ENCODE measurements at regions of chr14 and their contacts with region 1.

Region 1: DNA sequence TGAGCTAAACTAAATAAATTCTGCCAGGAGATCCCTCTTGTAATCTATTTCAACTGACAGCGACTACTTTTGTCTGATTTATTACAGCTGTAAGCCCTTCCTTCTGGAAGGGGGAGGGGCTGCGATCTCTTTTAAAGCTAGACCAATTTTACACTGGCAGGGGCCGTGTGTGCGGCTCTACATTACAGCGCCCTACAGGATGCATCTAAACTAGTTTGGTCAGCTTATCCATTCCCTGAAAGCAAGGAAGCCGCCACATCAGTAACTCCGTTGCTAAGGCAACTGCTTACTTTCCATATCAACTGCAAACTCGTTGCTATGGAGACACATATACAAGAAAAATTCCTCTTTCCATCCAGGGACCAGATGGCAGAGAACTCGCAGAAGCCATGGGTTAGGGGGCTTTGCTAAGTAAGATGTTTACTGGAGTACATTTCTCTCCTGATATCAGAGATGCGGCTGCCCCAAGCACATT is 17.4 kb downstream of the FOXN3 start:
- DNase-seq: no peak
- ATAC-seq: peak; percentile 42 to 47
- H3K4me3 ChIP-seq: no peak overlapping the region
- H3K27ac ChIP-seq: no peak overlapping the region
- H3K4me1 ChIP-seq: peaks cover 36% of the 10 kb centered on the region
- H3K27me3 ChIP-seq: no peaks in the 10 kb centered on the region
- CTCF ChIP-seq: no peak

Region 2: GRCh38 chr14:89351516-89352404 is 47.9 kb before region 1 on chr14:
- intact Hi-C with region 1: loop called (anchors 10 kb)
- DNase-seq: peak; percentile 56
- ATAC-seq: peak; percentile 53 to 83
- H3K4me3 ChIP-seq: peak overlapping the region; percentile 22
- H3K27ac ChIP-seq: peak overlapping the region; percentile 75
- H3K4me1 ChIP-seq: peaks cover 29% of the 10 kb centered on the region
- H3K27me3 ChIP-seq: no peaks in the 10 kb centered on the region
- CTCF ChIP-seq: no peak